ENCODE measurements at regions of chr17 and their contacts with region 1.

Region 1: DNA sequence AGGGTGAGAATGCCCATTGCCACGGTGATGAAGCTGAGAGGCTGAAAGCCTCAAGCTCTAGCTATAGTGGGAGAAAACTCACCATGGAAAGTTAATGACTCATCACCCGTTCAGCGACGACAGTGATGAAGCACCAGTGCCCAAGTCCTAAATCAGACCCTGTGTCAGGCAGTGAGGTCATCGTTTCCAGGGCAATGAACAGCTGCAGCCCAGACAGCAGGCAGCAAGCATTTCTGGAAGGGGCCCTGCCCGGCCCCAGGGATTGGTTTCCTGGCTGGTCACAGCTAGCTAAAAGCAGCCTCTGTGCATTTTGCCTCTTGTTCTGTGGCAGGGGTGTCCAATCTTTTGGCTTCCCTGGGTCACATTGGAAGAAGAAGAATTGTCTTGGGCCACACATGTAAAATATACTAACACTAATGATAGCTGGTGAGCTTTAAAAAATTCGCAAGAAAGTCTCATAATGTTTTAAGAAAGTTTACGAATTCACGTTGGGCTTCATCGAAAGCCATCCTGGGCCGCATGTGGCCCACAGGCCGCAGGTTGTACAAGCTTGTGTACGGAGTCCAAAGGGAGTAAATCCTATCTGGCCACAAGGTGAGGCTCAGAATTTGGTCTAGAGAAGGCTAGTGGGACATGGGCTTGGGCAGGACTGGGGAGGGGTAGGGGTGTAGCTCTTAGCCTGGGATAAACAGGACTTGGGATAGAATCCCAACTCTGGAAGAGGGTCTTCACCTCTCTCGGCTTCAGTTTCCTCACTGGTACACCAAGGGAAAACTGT is 40.6 kb downstream of the MIS12 start:
- DNase-seq: peak; percentile 89
- H3K4me3 ChIP-seq: no peak overlapping the region
- H3K27ac ChIP-seq: peak overlapping the region; percentile 41
- H3K4me1 ChIP-seq: peaks cover 11% of the 10 kb centered on the region
- H3K27me3 ChIP-seq: no peaks in the 10 kb centered on the region
- CTCF ChIP-seq: no peak

Region 2: GRCh38 chr17:5480962-5481361 is 46.0 kb before region 1 on chr17:
- CTCF ChIA-PET with region 1: no interaction called
- dilution Hi-C with region 1: loop called (anchors 5 kb)
- in situ Hi-C with region 1: no loop called
- intact Hi-C with region 1: no loop called
- DNase-seq: no peak
- H3K4me3 ChIP-seq: no peak overlapping the region
- H3K27ac ChIP-seq: no peak overlapping the region
- H3K4me1 ChIP-seq: peaks cover 8% of the 10 kb centered on the region
- H3K27me3 ChIP-seq: no peaks in the 10 kb centered on the region
- CTCF ChIP-seq: no peak

Region 3: DNA sequence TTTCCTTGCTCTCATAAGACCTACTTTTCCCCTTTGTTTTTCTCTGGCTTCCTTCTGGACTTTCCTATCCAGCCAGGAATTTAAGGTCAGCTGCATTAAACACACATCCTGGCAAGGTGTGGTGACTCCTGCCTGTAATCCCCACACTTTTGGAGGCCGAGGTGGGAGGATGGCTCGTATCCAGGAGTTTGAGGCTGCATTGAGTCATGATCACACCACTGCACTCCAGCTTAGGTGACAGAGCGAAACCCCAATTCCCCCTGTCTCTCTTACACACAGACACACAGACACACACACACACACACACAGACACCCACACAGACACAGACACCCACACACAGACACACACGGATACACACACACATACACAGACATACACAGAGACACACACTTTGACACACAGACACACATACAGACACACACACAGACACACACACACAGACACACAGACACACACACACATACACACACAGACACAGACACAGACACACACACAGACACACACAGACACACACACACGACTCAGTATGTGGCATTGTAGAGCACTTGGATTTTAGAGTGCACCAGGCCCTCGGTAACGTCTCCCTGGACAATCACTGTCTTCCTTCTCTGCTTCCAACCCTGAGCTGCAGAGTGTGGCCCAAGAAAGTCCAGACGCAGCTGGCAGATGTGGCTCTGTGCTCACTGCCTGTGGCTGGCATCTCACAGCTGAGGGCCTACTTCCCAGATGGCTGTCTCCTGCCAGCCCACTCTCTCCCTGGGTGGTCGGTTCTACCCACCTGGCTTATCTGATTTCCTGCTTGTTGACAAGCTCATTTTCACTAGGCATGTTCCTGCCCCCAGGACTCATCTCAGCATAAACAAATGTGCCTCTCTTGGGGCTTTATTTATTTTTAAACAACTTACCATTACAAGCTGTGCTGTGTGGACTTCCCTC is 18.3 kb after region 1 on chr17:
- CTCF ChIA-PET with region 1: no interaction called
- dilution Hi-C with region 1: no loop called
- in situ Hi-C with region 1: no loop called
- intact Hi-C with region 1: no loop called
- DNase-seq: peak; percentile 24
- H3K4me3 ChIP-seq: no peak overlapping the region
- H3K27ac ChIP-seq: no peak overlapping the region
- H3K4me1 ChIP-seq: no peaks in the 10 kb centered on the region
- H3K27me3 ChIP-seq: no peaks in the 10 kb centered on the region
- CTCF ChIP-seq: no peak

Region 4: DNA sequence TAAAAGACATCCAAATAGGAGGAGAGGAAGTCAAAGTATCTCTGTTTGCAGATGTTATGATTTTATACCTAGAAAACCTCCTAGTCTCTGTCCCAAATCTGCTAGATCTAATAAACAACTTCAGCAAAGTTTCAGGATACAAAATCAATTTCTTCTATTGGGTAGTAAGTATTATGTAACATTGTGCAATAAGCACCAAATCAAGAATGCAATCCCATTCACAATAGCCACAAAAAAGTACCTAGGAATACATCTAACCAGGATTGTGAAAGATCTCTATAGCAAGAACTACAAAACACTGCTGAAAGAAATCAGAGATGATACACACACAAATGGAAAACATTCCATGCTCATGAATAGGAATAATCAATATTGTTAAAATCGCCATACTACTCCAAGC is 44.3 kb after region 1 on chr17:
- CTCF ChIA-PET with region 1: no interaction called
- dilution Hi-C with region 1: loop called (anchors 5 kb)
- in situ Hi-C with region 1: no loop called
- intact Hi-C with region 1: no loop called
- DNase-seq: no peak
- H3K4me3 ChIP-seq: no peak overlapping the region
- H3K27ac ChIP-seq: no peak overlapping the region
- H3K4me1 ChIP-seq: no peaks in the 10 kb centered on the region
- H3K27me3 ChIP-seq: no peaks in the 10 kb centered on the region
- CTCF ChIP-seq: no peak

Region 5: GRCh38 chr17:5583406-5584382 is 56.7 kb after region 1 on chr17:
- CTCF ChIA-PET with region 1: no interaction called
- dilution Hi-C with region 1: no loop called
- in situ Hi-C with region 1: no loop called
- intact Hi-C with region 1: no loop called
- DNase-seq: no peak
- H3K4me3 ChIP-seq: peak overlapping the region; percentile 15 to 32 (median 31)
- H3K27ac ChIP-seq: peak overlapping the region; percentile 67
- H3K4me1 ChIP-seq: peaks cover 41% of the 10 kb centered on the region
- H3K27me3 ChIP-seq: no peaks in the 10 kb centered on the region
- CTCF ChIP-seq: no peak

Region 6: GRCh38 chr17:5610956-5611355 is 83.9 kb after region 1 on chr17:
- CTCF ChIA-PET with region 1: no interaction called
- dilution Hi-C with region 1: no loop called
- in situ Hi-C with region 1: no loop called
- intact Hi-C with region 1: no loop called
- DNase-seq: no peak
- H3K4me3 ChIP-seq: no peak overlapping the region
- H3K27ac ChIP-seq: no peak overlapping the region
- H3K4me1 ChIP-seq: no peaks in the 10 kb centered on the region
- H3K27me3 ChIP-seq: no peaks in the 10 kb centered on the region
- CTCF ChIP-seq: no peak

Region 7: DNA sequence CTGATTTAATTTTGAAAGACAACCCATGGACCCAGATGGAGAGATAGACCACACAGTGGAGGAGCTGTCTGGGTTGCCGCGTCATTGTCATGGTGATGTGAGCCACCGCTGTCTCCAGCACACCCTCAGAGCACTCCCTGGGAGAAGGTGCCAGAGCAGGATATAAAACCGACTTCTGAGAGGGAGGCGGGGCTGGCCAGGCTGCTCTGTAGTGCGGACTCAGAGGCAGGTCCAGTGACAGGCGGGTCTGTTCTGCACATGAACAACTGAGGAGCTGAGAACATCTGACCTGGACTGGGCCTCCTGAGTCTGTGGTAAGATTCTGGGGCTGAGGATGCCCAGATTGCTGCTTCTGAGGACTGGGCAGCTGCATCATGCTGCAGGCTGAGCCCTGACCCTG is 273.7 kb after region 1 on chr17:
- CTCF ChIA-PET with region 1: no interaction called
- dilution Hi-C with region 1: no loop called
- in situ Hi-C with region 1: no loop called
- intact Hi-C with region 1: no loop called
- DNase-seq: no peak
- H3K4me3 ChIP-seq: no peak overlapping the region
- H3K27ac ChIP-seq: no peak overlapping the region
- H3K4me1 ChIP-seq: no peaks in the 10 kb centered on the region
- H3K27me3 ChIP-seq: peaks cover 6% of the 10 kb centered on the region
- CTCF ChIP-seq: no peak